ENCODE measurements at regions of chr17 and their contacts with region 1.

Region 1: GRCh38 chr17:67602956-67603355 is 114.8 kb upstream of the NOL11 start:
- DNase-seq: peak; percentile 62
- ATAC-seq: peak; percentile 92
- H3K4me3 Mint-ChIP-seq: no peak overlapping the region
- H3K27ac Mint-ChIP-seq: 0 out of 2 replicates have a peak overlapping the region, but pooled peaks have one; percentile 17
- H3K4me1 Mint-ChIP-seq: peaks cover 17% of the 10 kb centered on the region
- H3K27me3 Mint-ChIP-seq: no peaks in the 10 kb centered on the region
- CTCF ChIP-seq: 0 out of 2 replicates have a peak, but pooled peaks have one; percentile 31

Region 2: GRCh38 chr17:67386965-67387551 is 215.9 kb before region 1 on chr17:
- CTCF ChIA-PET with region 1: interaction called, 13 read pairs
- POLR2A ChIA-PET with region 1: no interaction called
- DNase-seq: peak; percentile 79
- ATAC-seq: peak; percentile 83
- H3K4me3 Mint-ChIP-seq: no peak overlapping the region
- H3K27ac Mint-ChIP-seq: 0 out of 2 replicates have a peak overlapping the region, but pooled peaks have one; percentile 53
- H3K4me1 Mint-ChIP-seq: peaks cover 29% of the 10 kb centered on the region
- H3K27me3 Mint-ChIP-seq: no peaks in the 10 kb centered on the region
- CTCF ChIP-seq: peak; percentile 98

Region 3: DNA sequence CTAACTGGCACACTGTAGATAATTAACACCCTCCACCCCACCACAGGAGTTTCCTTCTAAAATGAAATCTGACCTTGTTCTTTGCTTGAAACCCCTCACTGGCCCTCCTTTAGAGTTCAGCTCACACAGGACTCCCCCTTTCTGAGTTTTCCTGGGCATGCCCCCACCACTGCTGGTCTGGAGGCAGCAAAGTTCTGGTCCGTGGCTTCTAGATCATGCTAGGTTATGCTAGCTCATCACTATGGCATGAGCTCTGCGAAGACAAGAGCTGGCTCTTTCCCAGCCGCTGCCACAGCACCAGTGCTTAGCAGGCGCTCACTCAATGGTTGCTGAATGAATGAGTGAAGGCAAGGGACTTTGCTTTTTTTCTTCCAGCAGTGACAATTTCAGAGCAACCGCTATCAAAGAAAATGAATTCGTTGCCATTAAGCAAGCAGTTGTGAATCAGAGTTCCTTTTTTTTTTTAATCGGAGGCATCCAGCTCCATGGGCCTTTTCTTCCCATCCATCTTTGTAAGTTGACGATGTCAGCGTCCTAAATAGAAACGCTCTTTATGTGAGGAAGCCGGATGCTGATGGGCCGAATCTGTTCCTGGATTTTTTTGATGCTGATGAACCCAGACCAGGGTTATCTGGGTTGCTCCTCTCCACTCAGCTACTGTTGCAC is 34.0 kb after region 1 on chr17:
- CTCF ChIA-PET with region 1: no interaction called
- POLR2A ChIA-PET with region 1: no interaction called
- DNase-seq: no peak
- ATAC-seq: no peak; the same call in 1 of the 2 replicates
- H3K4me3 Mint-ChIP-seq: no peak overlapping the region
- H3K27ac Mint-ChIP-seq: peak overlapping the region; percentile 83; the same call in 1 of the 2 replicates
- H3K4me1 Mint-ChIP-seq: peaks cover 9% of the 10 kb centered on the region; the same call in 1 of the 2 replicates
- H3K27me3 Mint-ChIP-seq: no peaks in the 10 kb centered on the region
- CTCF ChIP-seq: no peak

Region 4: GRCh38 chr17:67647482-67647881 is 44.5 kb after region 1 on chr17:
- CTCF ChIA-PET with region 1: interaction called, 10 read pairs
- POLR2A ChIA-PET with region 1: no interaction called
- DNase-seq: no peak
- ATAC-seq: no peak
- H3K4me3 Mint-ChIP-seq: no peak overlapping the region
- H3K27ac Mint-ChIP-seq: peak overlapping the region; percentile 57; the same call in 1 of the 2 replicates
- H3K4me1 Mint-ChIP-seq: peaks cover 12% of the 10 kb centered on the region
- H3K27me3 Mint-ChIP-seq: no peaks in the 10 kb centered on the region
- CTCF ChIP-seq: no peak

Measured in WTC11 (cell line).